Esophagus muscularis mucosa (tissue), 4 donors: ENCODE measurements at regions of chr14 and their contacts with region 1.

Region 1: GRCh38 chr14:90611936-90612335 is 204.3 kb downstream of the TTC7B start:
- DNase-seq: no peak
- H3K4me3 ChIP-seq: no peak overlapping the region
- H3K27ac ChIP-seq: peak overlapping the region in 3 of 4 donors; percentile 17 to 29 (median 24)
- H3K4me1 ChIP-seq: peaks cover 20 to 46% (median 34%) of the 10 kb centered on the region in 4 donors
- H3K27me3 ChIP-seq: no peaks in the 10 kb centered on the region
- CTCF ChIP-seq: no peak
- EP300 ChIP-seq: no peak
- POLR2A ChIP-seq: no peak

Region 2: GRCh38 chr14:89899291-89899690 is 712.6 kb before region 1 on chr14:
- intact Hi-C with region 1: no loop called
- DNase-seq: no peak
- H3K4me3 ChIP-seq: no peak overlapping the region
- H3K27ac ChIP-seq: no peak overlapping the region
- H3K4me1 ChIP-seq: peaks cover 6 to 9% (median 8%) of the 10 kb centered on the region in 4 donors
- H3K27me3 ChIP-seq: no peaks in the 10 kb centered on the region
- CTCF ChIP-seq: no peak
- EP300 ChIP-seq: no peak
- POLR2A ChIP-seq: no peak

Region 3: DNA sequence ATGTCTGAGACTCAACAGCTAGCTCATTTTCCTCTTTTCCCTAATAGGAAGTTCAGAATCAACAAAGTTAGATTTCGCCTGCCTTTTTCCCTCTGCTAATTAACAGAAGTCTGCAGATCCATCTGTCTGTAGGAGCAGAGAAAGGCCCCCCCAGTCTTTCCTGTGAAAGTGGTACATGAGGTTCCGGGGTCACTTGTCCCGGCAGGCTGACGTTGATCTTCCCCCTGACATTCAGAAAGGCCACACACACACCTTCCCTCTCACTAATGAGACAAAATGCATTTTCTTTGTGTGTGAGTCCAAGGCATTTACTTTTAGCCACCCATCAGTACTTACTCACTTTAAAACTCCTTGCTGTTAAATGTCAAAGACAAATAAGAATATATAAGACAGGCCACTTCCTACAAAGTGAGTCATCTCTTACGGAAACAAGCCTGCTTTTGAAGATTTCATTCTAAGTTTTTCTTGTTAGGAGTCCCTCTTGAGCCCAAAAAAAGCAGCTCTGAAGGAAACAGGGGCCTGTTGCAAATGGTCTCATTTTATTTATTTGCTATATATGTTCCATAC is 65.6 kb after region 1 on chr14:
- intact Hi-C with region 1: loop called (anchors 5 kb)
- DNase-seq: no peak
- H3K4me3 ChIP-seq: no peak overlapping the region
- H3K27ac ChIP-seq: peak overlapping the region; percentile 35 to 78 (median 76)
- H3K4me1 ChIP-seq: peaks cover 17 to 42% (median 39%) of the 10 kb centered on the region in 4 donors
- H3K27me3 ChIP-seq: no peaks in the 10 kb centered on the region
- CTCF ChIP-seq: no peak
- EP300 ChIP-seq: no peak
- POLR2A ChIP-seq: no peak